CD8-positive, alpha-beta T cell (primary cell): ENCODE measurements at regions of chr20 and their contacts with region 1.

Region 1: DNA sequence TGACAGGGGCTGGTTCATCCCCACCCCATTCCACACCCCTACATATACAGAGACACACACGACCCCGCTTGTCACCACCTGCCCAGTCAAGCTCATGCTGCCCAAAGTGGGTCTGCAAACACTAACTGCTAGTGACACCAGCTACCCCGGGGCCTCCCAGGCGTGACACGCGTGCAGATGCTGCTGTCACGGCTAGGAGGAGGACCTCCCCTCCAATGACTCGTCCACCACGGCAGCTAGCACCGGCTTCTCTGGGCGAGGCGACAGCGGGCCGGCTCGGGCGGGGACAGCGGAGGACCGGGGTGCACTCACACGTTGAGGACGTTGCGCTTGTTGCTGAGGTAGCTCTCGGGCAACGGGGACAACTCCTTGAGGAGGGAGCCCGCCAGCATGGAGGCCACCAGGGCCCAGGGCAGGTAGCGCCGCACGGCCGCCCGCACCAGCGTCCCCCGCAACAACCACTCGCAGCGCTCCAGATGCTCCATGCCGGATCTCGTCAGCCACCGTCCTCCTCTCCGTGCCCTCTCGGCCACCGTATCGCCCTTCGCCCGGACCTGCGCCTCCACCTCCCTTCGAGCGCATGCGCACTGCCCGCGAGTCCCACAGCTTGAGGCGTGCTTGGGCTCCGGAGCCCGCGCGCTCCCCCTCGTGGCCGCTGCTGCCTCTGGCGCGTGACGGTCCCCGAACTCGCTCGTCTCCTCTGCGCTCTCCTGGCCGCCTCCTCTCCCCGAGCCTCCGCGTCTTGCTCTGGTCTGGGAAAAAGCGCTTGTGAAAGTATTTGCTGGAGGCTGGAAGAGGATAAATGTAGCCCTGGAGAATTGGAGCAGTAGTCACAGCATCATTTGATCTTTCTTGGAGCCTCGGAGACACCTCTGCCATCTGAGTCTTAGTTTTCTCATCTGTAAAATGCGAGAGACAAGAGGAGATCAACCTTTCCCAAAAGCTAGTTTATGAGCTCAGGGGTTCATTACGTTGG is at the start of gene FITM2:
- DNase-seq: peak; percentile 96 to 99 (median 99)
- ATAC-seq: peak; percentile 95
- H3K4me3 ChIP-seq: peak within 1 kb of the TSS; percentile 73 to 89
- H3K4me3 Mint-ChIP-seq: peak within 1 kb of the TSS; percentile 96
- H3K27ac ChIP-seq: peak within 1 kb of the TSS; percentile 38 to 56
- H3K27ac Mint-ChIP-seq: peak within 1 kb of the TSS; percentile 89
- H3K4me1 ChIP-seq: peaks cover 17% of the 10 kb centered on the region
- H3K4me1 Mint-ChIP-seq: peaks cover 33% of the 10 kb centered on the region
- H3K27me3 ChIP-seq: no peaks in the 10 kb centered on the region
- H3K27me3 Mint-ChIP-seq: no peaks in the 10 kb centered on the region
- CTCF ChIP-seq: peak; percentile 87
- total RNA-seq, gene FITM2: 3.3 to 3.4 TPM

Region 2: DNA sequence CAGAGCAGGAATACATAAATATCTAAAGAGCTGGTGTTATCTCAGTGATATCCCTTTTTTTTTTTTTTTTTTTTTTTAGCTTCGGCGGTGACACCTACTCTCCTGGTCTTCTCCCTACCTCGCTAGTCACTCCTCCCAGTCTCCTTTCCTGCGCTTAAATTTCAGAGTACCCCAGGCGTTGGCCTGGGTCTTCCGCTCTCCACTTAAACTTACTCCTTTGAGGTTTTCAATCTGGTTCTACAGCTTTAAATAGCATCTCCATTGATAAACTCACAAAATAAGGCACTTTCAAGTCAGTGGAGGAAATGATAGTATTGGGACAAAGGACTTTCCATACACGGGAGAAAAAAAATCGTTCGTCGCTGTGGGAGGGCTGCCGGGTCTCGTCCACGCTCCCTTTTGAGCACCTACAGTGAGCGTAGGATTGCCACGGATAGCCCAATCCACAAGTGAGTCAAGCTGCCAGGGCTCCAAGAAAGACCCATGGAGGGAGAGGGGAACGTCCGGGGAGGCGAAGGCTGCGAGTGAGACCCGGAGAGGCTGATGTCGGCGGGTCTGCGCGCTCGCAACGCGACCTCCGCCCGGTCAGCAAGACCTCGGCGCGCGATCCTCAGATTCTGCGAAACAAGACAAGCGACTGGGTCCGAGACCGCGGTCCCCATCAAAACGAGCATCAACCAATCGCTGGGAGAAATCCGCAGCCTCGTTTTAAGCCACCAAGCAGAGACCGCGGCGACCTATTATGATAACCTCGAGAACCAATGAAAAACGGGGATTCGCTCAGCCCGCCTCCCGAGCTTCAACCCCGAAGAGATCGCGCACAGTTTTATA is 853.9 kb before region 1 on chr20:
- CTCF ChIA-PET with region 1: no interaction called
- POLR2A ChIA-PET with region 1: no interaction called
- intact Hi-C with region 1: loop called in 1 of 2 experiments (anchors 1 kb)
- DNase-seq: peak; percentile 68 to 94 (median 87)
- ATAC-seq: peak; percentile 79
- H3K4me3 ChIP-seq: peak overlapping the region; percentile 97 to 100
- H3K4me3 Mint-ChIP-seq: peak overlapping the region; percentile 92
- H3K27ac ChIP-seq: peak overlapping the region; percentile 98 to 100
- H3K27ac Mint-ChIP-seq: peak overlapping the region; percentile 98
- H3K4me1 ChIP-seq: peaks cover 16% of the 10 kb centered on the region
- H3K4me1 Mint-ChIP-seq: peaks cover 36% of the 10 kb centered on the region
- H3K27me3 ChIP-seq: no peaks in the 10 kb centered on the region
- H3K27me3 Mint-ChIP-seq: peaks cover 8% of the 10 kb centered on the region
- CTCF ChIP-seq: no peak

Region 3: DNA sequence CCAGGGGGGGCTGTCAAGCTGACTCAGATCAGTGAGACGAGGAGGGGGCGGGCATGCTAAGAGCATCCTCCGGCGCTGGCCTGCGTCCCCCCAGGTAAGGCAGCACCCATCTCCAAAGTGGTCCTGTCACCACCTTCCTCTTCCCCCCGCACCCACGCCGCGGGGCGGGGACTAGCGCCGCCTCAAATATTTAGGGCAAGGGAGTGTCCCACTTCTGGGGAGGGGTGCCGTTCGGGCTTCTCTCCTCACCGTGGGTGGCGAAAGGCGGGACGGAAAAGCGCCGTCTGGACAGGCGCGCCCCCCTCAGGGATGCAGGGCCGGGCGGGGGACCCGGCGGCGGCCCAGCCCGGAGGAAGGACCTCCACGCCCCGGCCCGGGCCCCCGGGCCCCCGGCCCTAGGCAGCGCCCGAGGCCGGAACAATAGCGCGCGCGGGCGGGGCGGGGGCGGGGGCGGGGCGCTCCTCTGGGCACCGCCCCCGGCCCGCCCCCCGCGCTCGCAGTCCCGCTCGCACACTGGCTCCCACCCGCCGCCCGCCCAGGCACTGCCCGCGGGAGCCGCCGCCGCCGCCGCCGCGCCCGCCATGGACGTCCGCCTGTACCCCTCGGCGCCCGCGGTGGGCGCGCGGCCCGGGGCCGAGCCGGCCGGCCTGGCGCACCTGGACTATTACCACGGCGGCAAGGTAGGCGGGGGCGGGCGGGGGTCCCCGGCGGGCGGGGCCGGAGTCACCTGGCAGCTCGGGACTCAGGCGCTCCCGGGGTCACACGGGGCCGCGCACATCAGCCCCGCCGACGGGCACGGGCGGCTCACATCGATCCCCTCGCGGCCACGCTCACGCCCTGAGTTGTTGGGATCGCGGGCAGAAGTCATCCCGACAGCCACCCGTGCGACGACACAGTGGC is 396.4 kb before region 1 on chr20 and contains the start of gene TOX2:
- CTCF ChIA-PET with region 1: no interaction called
- POLR2A ChIA-PET with region 1: no interaction called
- intact Hi-C with region 1: no loop called
- DNase-seq: peak in 8 of 9 experiments; percentile 24 to 65 (median 57)
- ATAC-seq: peak; percentile 72
- H3K4me3 ChIP-seq: peak within 1 kb of the TSS; percentile 18 to 32
- H3K4me3 Mint-ChIP-seq: peak within 1 kb of the TSS; percentile 84
- H3K27ac ChIP-seq: no peak within 1 kb of the TSS
- H3K27ac Mint-ChIP-seq: peak within 1 kb of the TSS; percentile 71
- H3K4me1 ChIP-seq: peaks cover 19% of the 10 kb centered on the region
- H3K4me1 Mint-ChIP-seq: peaks cover 18% of the 10 kb centered on the region
- H3K27me3 ChIP-seq: peaks cover 3 to 27% of the 10 kb centered on the region in 2 experiments
- H3K27me3 Mint-ChIP-seq: peaks cover 46% of the 10 kb centered on the region
- CTCF ChIP-seq: no peak
- total RNA-seq, gene TOX2: 1.7 to 1.8 TPM

Region 4: GRCh38 chr20:43963872-43964791 is 346.8 kb before region 1 on chr20:
- CTCF ChIA-PET with region 1: no interaction called
- POLR2A ChIA-PET with region 1: no interaction called
- intact Hi-C with region 1: loop called in 1 of 2 experiments (anchors 5 kb)
- DNase-seq: peak in 6 of 9 experiments; percentile 21 to 74 (median 61)
- ATAC-seq: peak; percentile 88
- H3K4me3 ChIP-seq: no peak overlapping the region
- H3K4me3 Mint-ChIP-seq: peak overlapping the region; percentile 56
- H3K27ac ChIP-seq: no peak overlapping the region
- H3K27ac Mint-ChIP-seq: peak overlapping the region; percentile 80
- H3K4me1 ChIP-seq: peaks cover 54% of the 10 kb centered on the region
- H3K4me1 Mint-ChIP-seq: peaks cover 41% of the 10 kb centered on the region
- H3K27me3 ChIP-seq: peaks cover 0 to 13% of the 10 kb centered on the region in 2 experiments
- H3K27me3 Mint-ChIP-seq: no peaks in the 10 kb centered on the region
- CTCF ChIP-seq: no peak

Region 5: DNA sequence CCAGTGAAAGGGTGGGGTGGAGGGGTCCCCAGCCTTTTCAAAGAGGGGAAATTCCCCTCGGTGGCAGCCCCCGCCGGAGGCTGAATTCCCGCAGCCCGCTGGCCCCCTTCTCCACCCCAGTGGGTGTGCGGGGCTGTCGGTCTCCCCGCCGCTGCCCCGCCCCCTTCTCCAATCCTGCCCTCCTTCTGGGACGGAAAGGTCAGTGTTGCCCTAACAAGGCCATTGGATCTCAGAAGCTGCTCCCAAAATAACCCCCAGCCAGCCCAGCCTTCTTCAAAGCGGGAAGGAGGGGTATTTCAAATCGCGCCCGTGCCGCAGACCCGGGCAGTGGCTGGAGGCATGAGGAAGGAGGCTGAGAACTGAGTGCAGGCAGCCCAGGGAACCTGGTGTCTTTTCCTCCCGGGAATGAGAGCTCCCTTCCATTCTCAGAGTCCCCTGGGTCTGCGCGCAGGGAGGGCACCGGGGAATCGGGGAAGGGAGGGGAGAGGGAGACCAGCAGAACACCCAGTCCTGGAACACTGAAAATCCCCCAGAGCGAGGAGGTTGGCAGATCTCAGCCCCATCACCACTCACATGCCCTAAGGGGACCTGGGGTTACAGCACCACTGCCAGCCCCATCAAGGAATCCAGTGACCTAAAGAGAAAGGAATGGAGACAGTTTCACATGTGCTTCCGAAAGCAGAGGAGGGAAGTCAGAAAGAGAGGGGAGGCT is 123.7 kb before region 1 on chr20 and contains the start of gene JPH2:
- CTCF ChIA-PET with region 1: interaction called, 10 read pairs
- POLR2A ChIA-PET with region 1: no interaction called
- intact Hi-C with region 1: no loop called
- DNase-seq: no peak
- ATAC-seq: peak; percentile 11
- H3K4me3 ChIP-seq: peak within 1 kb of the TSS in 1 of 2 experiments; percentile 29
- H3K4me3 Mint-ChIP-seq: peak within 1 kb of the TSS; percentile 16
- H3K27ac ChIP-seq: no peak within 1 kb of the TSS
- H3K27ac Mint-ChIP-seq: no peak within 1 kb of the TSS
- H3K4me1 ChIP-seq: peaks cover 16% of the 10 kb centered on the region
- H3K4me1 Mint-ChIP-seq: peaks cover 9% of the 10 kb centered on the region
- H3K27me3 ChIP-seq: peaks cover 19 to 23% of the 10 kb centered on the region in 2 experiments
- H3K27me3 Mint-ChIP-seq: peaks cover 49% of the 10 kb centered on the region
- CTCF ChIP-seq: no peak
- total RNA-seq, gene JPH2: not detected

Region 6: DNA sequence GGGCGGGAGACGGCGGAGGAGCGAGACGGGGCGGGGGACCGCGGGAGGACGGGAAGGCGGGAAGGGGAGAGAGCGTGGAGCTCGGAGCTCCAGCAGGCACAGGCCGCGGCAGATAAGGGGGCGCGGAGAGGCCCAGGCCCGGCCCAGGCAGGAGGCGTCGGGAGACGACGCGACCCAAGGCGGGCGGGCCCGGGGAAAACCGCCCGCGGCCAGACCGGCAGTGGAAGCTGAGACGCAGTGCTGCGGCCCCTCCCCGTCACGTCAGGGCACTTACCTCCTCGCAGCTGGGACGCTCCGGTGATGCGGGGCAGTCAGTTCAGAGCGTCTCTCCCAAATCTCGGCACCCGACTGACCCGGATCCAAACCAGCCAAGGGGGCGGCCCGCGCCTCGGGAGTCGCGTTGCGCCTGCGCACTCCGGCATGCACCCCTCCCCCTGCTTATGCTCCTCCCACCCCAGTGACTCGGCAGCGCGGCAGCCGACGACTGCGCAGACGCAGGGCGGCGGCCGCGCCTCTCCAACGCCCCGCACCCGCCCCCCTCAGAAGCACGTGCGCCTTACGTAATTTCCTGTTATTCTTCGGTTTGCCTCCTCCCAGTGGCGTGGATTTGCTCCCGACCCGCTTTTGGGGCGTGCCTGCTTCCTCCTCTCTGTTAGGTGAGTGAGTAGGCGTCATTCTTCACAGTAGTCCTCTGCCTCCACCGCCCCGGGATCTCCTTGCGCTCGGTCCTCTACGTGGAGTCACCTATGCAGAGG is 100.4 kb before region 1 on chr20 and contains the start of gene OSER1:
- CTCF ChIA-PET with region 1: interaction called, 596 read pairs
- POLR2A ChIA-PET with region 1: interaction called, 58 read pairs
- intact Hi-C with region 1: loop called in 1 of 2 experiments (anchors 1 kb)
- DNase-seq: peak; percentile 97 to 99 (median 98)
- ATAC-seq: peak; percentile 83
- H3K4me3 ChIP-seq: peak within 1 kb of the TSS; percentile 78 to 91
- H3K4me3 Mint-ChIP-seq: peak within 1 kb of the TSS; percentile 96
- H3K27ac ChIP-seq: peak within 1 kb of the TSS; percentile 93 to 96
- H3K27ac Mint-ChIP-seq: peak within 1 kb of the TSS; percentile 99
- H3K4me1 ChIP-seq: peaks cover 43% of the 10 kb centered on the region
- H3K4me1 Mint-ChIP-seq: peaks cover 73% of the 10 kb centered on the region
- H3K27me3 ChIP-seq: no peaks in the 10 kb centered on the region
- H3K27me3 Mint-ChIP-seq: no peaks in the 10 kb centered on the region
- CTCF ChIP-seq: no peak
- total RNA-seq, gene OSER1: 201 to 204 TPM

Region 7: GRCh38 chr20:44388466-44389023 is 77.6 kb after region 1 on chr20:
- CTCF ChIA-PET with region 1: interaction called, 25 read pairs
- POLR2A ChIA-PET with region 1: interaction called, 4 read pairs
- intact Hi-C with region 1: loop called (anchors 2 to 5 kb)
- DNase-seq: peak; percentile 13 to 77 (median 63)
- ATAC-seq: peak; percentile 88
- H3K4me3 ChIP-seq: no peak overlapping the region
- H3K4me3 Mint-ChIP-seq: no peak overlapping the region
- H3K27ac ChIP-seq: no peak overlapping the region
- H3K27ac Mint-ChIP-seq: no peak overlapping the region
- H3K4me1 ChIP-seq: no peaks in the 10 kb centered on the region
- H3K4me1 Mint-ChIP-seq: peaks cover 10% of the 10 kb centered on the region
- H3K27me3 ChIP-seq: no peaks in the 10 kb centered on the region
- H3K27me3 Mint-ChIP-seq: peaks cover 14% of the 10 kb centered on the region
- CTCF ChIP-seq: peak; percentile 68

Region 8: GRCh38 chr20:44609511-44610312 is 298.8 kb after region 1 on chr20:
- CTCF ChIA-PET with region 1: interaction called, 9 read pairs
- POLR2A ChIA-PET with region 1: no interaction called
- intact Hi-C with region 1: loop called (anchors 1 kb)
- DNase-seq: peak; percentile 71 to 93 (median 87)
- ATAC-seq: peak; percentile 80
- H3K4me3 ChIP-seq: peak overlapping the region in 1 of 2 experiments; percentile 5
- H3K4me3 Mint-ChIP-seq: peak overlapping the region; percentile 53
- H3K27ac ChIP-seq: peak overlapping the region; percentile 69 to 83
- H3K27ac Mint-ChIP-seq: peak overlapping the region; percentile 98
- H3K4me1 ChIP-seq: peaks cover 48% of the 10 kb centered on the region
- H3K4me1 Mint-ChIP-seq: peaks cover 39% of the 10 kb centered on the region
- H3K27me3 ChIP-seq: no peaks in the 10 kb centered on the region
- H3K27me3 Mint-ChIP-seq: no peaks in the 10 kb centered on the region
- CTCF ChIP-seq: peak; percentile 92